CD4-positive, alpha-beta memory T cell (primary cell): ENCODE measurements at regions of chr3 and their contacts with region 1.

Region 1: GRCh38 chr3:177197041-177197727 is at the start of gene TBL1XR1:
- DNase-seq: peak; percentile 91 to 92 (median 92)
- H3K4me3 ChIP-seq: peak within 1 kb of the TSS; percentile 92 to 97
- H3K4me3 Mint-ChIP-seq: peak within 1 kb of the TSS; percentile 91 to 99 (median 98)
- H3K27ac ChIP-seq: peak within 1 kb of the TSS; percentile 89
- H3K27ac Mint-ChIP-seq: peak within 1 kb of the TSS; percentile 75 to 99 (median 98)
- H3K4me1 ChIP-seq: peaks cover 64% of the 10 kb centered on the region
- H3K4me1 Mint-ChIP-seq: peaks cover 44 to 78% (median 59%) of the 10 kb centered on the region in 4 donors
- H3K27me3 ChIP-seq: no peaks in the 10 kb centered on the region
- H3K27me3 Mint-ChIP-seq: no peaks in the 10 kb centered on the region
- total RNA-seq, gene TBL1XR1: 159 to 172 TPM

Region 2: DNA sequence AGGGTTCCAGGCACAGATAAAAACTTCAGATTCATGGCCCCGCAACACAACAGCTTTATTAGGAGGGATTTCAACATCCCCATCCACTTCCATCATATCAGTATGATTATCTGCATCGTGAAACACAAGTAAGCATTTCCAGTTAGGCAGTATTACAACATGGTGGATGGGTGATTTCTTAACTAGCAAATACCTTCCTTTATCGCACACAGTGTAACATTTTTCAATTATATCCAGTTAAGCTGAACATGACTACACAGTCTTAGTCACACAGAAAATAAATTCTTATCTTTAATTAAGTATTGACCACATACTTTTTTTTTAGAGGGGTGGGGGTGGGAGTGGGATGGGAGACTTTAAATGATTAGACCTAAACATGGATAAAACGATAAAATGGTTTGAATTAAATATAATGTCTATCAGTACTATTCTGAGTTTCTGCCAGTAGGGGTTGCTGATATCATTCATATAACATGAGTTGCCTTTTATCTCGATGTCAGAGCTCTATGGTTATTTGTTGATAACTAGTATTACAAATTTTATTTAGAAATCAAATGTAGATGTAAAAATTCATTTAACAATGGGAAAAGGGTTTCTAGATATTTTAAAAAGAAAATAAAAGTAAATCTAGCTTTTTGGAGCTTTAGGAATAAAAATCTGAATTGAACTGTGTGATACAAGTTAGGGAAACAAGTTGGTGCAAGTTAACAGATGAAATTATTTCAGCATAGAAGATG is 146.5 kb before region 1 on chr3:
- CTCF ChIA-PET with region 1: interaction called, 28 read pairs
- POLR2A ChIA-PET with region 1: interaction called, 61 read pairs
- intact Hi-C with region 1: loop called (anchors 1 kb)
- DNase-seq: peak in 4 of 5 donors; percentile 53 to 64 (median 55)
- H3K4me3 ChIP-seq: no peak overlapping the region
- H3K4me3 Mint-ChIP-seq: no peak overlapping the region
- H3K27ac ChIP-seq: no peak overlapping the region
- H3K27ac Mint-ChIP-seq: peak overlapping the region in 6 of 7 donors; percentile 16 to 76 (median 38)
- H3K4me1 ChIP-seq: peaks cover 8% of the 10 kb centered on the region
- H3K4me1 Mint-ChIP-seq: peaks cover 15 to 19% (median 16%) of the 10 kb centered on the region in 4 donors
- H3K27me3 ChIP-seq: no peaks in the 10 kb centered on the region
- H3K27me3 Mint-ChIP-seq: no peaks in the 10 kb centered on the region

Region 3: DNA sequence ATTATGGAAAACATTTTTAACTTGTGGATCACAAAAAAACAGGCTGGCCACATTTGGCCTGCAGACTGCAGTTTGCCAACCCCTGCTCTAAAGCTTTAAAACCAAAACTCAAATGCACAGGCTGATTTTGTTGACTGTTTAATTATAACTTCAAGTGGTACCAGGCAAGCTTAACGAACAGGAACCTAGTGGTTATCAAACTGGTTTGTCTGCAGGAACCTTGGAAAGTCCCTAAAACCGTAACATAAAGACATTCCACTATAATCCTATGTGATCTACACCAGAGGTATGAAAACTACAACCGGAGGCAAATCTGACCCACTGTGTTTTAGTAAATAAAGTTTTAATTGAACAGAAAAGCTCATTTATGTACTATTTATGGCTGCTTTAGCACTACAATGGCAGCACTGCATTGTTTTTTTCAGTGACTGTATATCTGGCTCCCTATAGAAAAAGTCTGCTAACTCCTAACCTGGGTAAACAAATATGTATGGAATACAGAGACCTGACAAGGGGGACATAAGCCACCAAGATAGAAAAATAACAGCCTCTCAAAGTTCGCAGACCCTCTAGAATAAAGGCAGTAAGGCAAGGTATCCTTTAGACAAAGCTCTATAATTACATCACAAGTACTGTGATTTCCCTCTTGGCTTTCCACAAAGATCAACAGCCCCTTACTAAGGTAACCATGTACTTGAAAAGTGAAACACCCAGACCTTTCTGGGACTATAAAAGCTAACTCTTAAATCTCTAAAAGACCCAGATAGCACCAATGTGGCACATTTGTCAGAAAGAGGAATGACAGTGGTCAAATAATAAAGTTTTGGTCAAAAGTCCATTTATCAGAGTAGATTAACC is 52.0 kb before region 1 on chr3:
- CTCF ChIA-PET with region 1: interaction called, 10 read pairs
- POLR2A ChIA-PET with region 1: interaction called, 78 read pairs
- intact Hi-C with region 1: loop called (anchors 2 kb)
- DNase-seq: peak; percentile 48 to 72 (median 60)
- H3K4me3 ChIP-seq: no peak overlapping the region
- H3K4me3 Mint-ChIP-seq: peak overlapping the region; percentile 57 to 78 (median 72)
- H3K27ac ChIP-seq: peak overlapping the region; percentile 61
- H3K27ac Mint-ChIP-seq: peak overlapping the region; percentile 82 to 96 (median 92)
- H3K4me1 ChIP-seq: peaks cover 93% of the 10 kb centered on the region
- H3K4me1 Mint-ChIP-seq: peaks cover 63 to 84% (median 70%) of the 10 kb centered on the region in 4 donors
- H3K27me3 ChIP-seq: no peaks in the 10 kb centered on the region
- H3K27me3 Mint-ChIP-seq: no peaks in the 10 kb centered on the region

Region 4: GRCh38 chr3:177185035-177185574 is 12.1 kb before region 1 on chr3:
- CTCF ChIA-PET with region 1: interaction called, 6 read pairs
- POLR2A ChIA-PET with region 1: interaction called, 10 read pairs
- intact Hi-C with region 1: no loop called
- DNase-seq: no peak
- H3K4me3 ChIP-seq: no peak overlapping the region
- H3K4me3 Mint-ChIP-seq: peak overlapping the region in 5 of 8 donors; percentile 0 to 56 (median 4)
- H3K27ac ChIP-seq: no peak overlapping the region
- H3K27ac Mint-ChIP-seq: peak overlapping the region in 4 of 7 donors; percentile 3 to 60 (median 12)
- H3K4me1 ChIP-seq: peaks cover 79% of the 10 kb centered on the region
- H3K4me1 Mint-ChIP-seq: peaks cover 43 to 78% (median 62%) of the 10 kb centered on the region in 4 donors
- H3K27me3 ChIP-seq: no peaks in the 10 kb centered on the region
- H3K27me3 Mint-ChIP-seq: no peaks in the 10 kb centered on the region

Region 5: GRCh38 chr3:177345049-177345972 is 148.1 kb after region 1 on chr3:
- CTCF ChIA-PET with region 1: interaction called, 3 read pairs
- POLR2A ChIA-PET with region 1: interaction called, 10 read pairs
- intact Hi-C with region 1: no loop called
- DNase-seq: peak in 4 of 5 donors; percentile 8 to 82 (median 24)
- H3K4me3 ChIP-seq: no peak overlapping the region
- H3K4me3 Mint-ChIP-seq: peak overlapping the region in 6 of 8 donors; percentile 36 to 68 (median 56)
- H3K27ac ChIP-seq: no peak overlapping the region
- H3K27ac Mint-ChIP-seq: peak overlapping the region in 6 of 7 donors; percentile 25 to 89 (median 55)
- H3K4me1 ChIP-seq: peaks cover 19% of the 10 kb centered on the region
- H3K4me1 Mint-ChIP-seq: peaks cover 15 to 25% (median 17%) of the 10 kb centered on the region in 4 donors
- H3K27me3 ChIP-seq: no peaks in the 10 kb centered on the region
- H3K27me3 Mint-ChIP-seq: no peaks in the 10 kb centered on the region

Region 6: DNA sequence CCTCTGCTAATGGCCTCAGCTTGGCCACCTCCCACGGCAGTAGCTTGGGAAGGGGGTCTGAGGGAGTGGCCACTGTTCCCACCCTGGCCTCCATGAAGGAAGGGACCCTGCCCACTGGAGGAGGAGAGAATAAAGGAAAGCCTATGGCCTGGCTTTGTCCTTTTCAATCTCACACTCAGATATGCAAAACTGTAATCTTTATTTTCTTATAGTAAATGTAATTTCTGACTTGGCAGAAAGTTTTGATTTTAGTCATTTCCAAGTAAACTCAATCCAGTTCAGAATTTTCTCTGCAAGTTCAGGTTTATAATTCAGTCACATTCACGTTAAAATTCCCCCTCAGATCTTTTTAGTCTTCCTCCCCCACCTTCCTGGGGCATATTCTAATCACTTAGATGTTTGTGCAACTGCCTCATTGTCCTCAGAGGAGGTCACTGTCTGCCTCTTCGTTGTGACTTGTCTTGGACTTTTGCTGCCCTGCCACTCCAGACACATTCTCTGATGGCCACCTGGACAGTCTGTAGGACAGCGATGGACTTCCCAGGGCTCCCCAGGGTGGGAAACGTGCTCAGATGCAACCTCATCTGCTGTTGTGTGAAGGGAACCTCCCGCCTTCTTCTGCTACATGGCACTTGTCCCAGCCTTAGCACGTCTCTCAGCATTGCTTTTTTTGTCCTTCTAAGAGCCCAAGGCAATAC is 222.9 kb after region 1 on chr3:
- CTCF ChIA-PET with region 1: no interaction called
- POLR2A ChIA-PET with region 1: no interaction called
- intact Hi-C with region 1: no loop called
- DNase-seq: no peak
- H3K4me3 ChIP-seq: no peak overlapping the region
- H3K4me3 Mint-ChIP-seq: no peak overlapping the region
- H3K27ac ChIP-seq: no peak overlapping the region
- H3K27ac Mint-ChIP-seq: no peak overlapping the region
- H3K4me1 ChIP-seq: peaks cover 10% of the 10 kb centered on the region
- H3K4me1 Mint-ChIP-seq: peaks cover 5 to 19% (median 15%) of the 10 kb centered on the region in 4 donors
- H3K27me3 ChIP-seq: no peaks in the 10 kb centered on the region
- H3K27me3 Mint-ChIP-seq: no peaks in the 10 kb centered on the region

Region 7: GRCh38 chr3:177538750-177539730 is 341.9 kb after region 1 on chr3:
- CTCF ChIA-PET with region 1: interaction called, 4 read pairs
- POLR2A ChIA-PET with region 1: interaction called, 34 read pairs
- intact Hi-C with region 1: no loop called
- DNase-seq: peak in 4 of 5 donors; percentile 48 to 59 (median 56)
- H3K4me3 ChIP-seq: peak overlapping the region in 1 of 2 donors; percentile 8
- H3K4me3 Mint-ChIP-seq: peak overlapping the region; percentile 55 to 87 (median 84)
- H3K27ac ChIP-seq: peak overlapping the region; percentile 36
- H3K27ac Mint-ChIP-seq: peak overlapping the region; percentile 79 to 93 (median 92)
- H3K4me1 ChIP-seq: peaks cover 46% of the 10 kb centered on the region
- H3K4me1 Mint-ChIP-seq: peaks cover 47 to 68% (median 55%) of the 10 kb centered on the region in 4 donors
- H3K27me3 ChIP-seq: no peaks in the 10 kb centered on the region
- H3K27me3 Mint-ChIP-seq: no peaks in the 10 kb centered on the region

Region 8: GRCh38 chr3:177665122-177665808 is 468.1 kb after region 1 on chr3:
- CTCF ChIA-PET with region 1: interaction called, 4 read pairs
- POLR2A ChIA-PET with region 1: no interaction called
- intact Hi-C with region 1: loop called (anchors 2 kb)
- DNase-seq: no peak
- H3K4me3 ChIP-seq: no peak overlapping the region
- H3K4me3 Mint-ChIP-seq: no peak overlapping the region
- H3K27ac ChIP-seq: no peak overlapping the region
- H3K27ac Mint-ChIP-seq: peak overlapping the region in 1 of 7 donors; percentile 54
- H3K4me1 ChIP-seq: no peaks in the 10 kb centered on the region
- H3K4me1 Mint-ChIP-seq: peaks cover 0 to 6% (median 2%) of the 10 kb centered on the region in 4 donors
- H3K27me3 ChIP-seq: no peaks in the 10 kb centered on the region
- H3K27me3 Mint-ChIP-seq: no peaks in the 10 kb centered on the region